Posterior cingulate gyrus (tissue), 11 donors: ENCODE measurements at regions of chr11 and their contacts with region 1.

Region 1: GRCh38 chr11:94171693-94172440 is 43.2 kb downstream of the PANX1 start:
- DNase-seq: peak in 6 of 10 donors; percentile 31 to 74 (median 33)

Region 2: DNA sequence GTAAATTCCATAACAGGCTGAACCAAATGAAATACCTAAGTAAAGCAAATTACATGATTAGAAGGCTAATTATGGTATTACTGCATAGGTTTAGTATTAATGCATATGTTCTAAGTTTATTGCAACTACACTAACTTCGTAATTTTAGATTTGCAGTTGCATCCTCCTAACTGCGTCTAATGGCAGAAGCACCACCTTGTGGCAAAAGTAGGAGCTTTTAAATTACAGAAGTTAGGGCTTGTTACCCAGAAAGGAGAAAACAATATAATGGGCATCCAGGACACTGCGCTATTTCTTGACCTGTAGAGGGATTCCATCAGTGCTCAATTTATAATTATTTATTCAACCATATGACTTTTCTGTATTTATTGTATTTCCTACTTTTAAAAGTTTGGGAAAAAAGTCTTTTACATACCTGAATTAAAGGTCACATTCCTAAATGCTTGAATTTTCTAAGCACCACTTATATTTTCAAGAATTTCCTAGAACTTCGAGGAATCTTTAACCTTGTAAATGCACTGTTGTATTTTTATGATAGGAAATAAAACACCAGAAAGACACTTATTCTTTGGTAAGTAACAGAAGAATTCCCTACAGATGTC is 245.6 kb after region 1 on chr11:
- intact Hi-C with region 1: loop called (anchors 5 kb)
- DNase-seq: no peak

Region 3: DNA sequence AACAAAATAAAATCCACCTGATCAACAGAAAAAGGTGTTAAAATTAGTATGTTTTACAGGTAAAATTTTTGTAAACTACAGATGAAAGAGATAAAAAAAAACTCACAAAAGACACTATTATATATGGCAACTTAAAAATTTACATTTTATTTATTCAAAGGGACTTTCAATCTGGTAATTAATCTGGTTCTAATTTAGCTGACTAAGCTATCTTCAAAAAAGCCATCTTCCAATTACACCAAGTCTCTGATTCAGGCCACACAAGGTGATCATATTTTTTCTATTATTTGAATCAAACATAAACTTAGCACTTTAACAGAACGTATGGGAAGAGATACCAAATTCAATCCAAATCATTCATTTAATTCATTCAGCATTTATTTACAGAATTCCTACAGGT is 314.2 kb after region 1 on chr11:
- intact Hi-C with region 1: loop called (anchors 5 kb)
- DNase-seq: no peak